Head of caudate nucleus (tissue), 42 donors: ENCODE measurements at regions of chr19 and their contacts with region 1.

Region 1: GRCh38 chr19:52637718-52638585 is at the start of gene ZNF83:
- DNase-seq: peak; percentile 89 to 99 (median 96)

Region 2: GRCh38 chr19:52722062-52723003 is 84.4 kb after region 1 on chr19:
- intact Hi-C with region 1: loop called (anchors 10 kb)
- DNase-seq: no peak

Region 3: DNA sequence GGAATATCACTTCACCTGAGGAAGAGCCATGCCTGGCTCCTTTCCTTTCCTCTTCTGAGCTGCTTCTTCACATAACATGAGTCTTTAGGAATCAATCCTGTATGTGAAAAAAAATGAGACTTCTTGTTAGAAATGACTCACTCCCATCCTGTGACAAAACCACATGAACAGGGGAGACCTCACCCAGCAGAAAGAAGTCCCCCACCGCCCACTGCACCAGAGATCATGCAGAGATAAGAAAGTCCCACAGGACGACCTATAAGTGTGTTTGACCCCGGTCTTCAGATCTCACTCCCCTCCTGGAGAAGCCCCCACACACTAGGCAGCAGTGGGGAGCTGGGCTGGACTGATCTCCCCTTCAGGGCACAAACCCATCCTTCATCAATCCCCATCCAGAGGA is 140.9 kb after region 1 on chr19:
- intact Hi-C with region 1: no loop called
- DNase-seq: no peak